H1 (cell line): ENCODE measurements at regions of chr4 and their contacts with region 1.

Region 1: GRCh38 chr4:181261279-181261678 is 981.9 kb upstream of the TENM3 start:
- DNase-seq: no peak
- H3K4me3 ChIP-seq: no peak overlapping the region
- H3K27ac ChIP-seq: no peak overlapping the region
- H3K4me1 ChIP-seq: peaks cover 0 to 3% (median 1%) of the 10 kb centered on the region in 4 experiments; a peak in 3 of 7 replicates
- H3K27me3 ChIP-seq: no peaks in the 10 kb centered on the region
- CTCF ChIP-seq: peak in 2 of 3 experiments; percentile 47 to 52; a peak in 2 of 4 replicates
- EP300 ChIP-seq: no peak
- POLR2A ChIP-seq: no peak
- RAD21 ChIP-seq: peak; percentile 62 to 70

Region 2: DNA sequence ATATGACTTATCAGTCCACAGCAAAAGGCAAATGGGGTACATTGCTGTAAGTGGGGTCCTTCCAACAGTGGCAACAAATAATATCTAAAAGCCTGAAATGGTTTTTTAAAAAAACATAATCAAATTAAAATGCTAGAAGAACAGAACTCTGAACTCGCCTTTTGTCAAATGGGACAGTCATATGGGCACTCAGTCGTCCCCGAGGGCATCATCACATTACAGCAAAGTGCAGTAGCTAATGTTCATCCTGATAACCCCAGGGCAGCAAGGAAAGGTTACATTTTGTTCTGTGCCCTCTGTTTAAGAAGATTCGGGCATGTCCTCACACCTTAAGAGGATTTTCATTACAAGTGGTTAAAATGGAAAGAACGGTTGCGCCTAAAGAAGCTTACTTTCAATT is 16.0 kb before region 1 on chr4:
- CTCF ChIA-PET with region 1: interaction called, 13 read pairs
- POLR2A ChIA-PET with region 1: no interaction called
- DNase-seq: no peak
- H3K4me3 ChIP-seq: no peak overlapping the region
- H3K27ac ChIP-seq: no peak overlapping the region
- H3K4me1 ChIP-seq: peaks cover 2 to 6% (median 3%) of the 10 kb centered on the region in 4 experiments; a peak in 5 of 7 replicates
- H3K27me3 ChIP-seq: no peaks in the 10 kb centered on the region
- CTCF ChIP-seq: no peak
- EP300 ChIP-seq: no peak
- POLR2A ChIP-seq: no peak
- RAD21 ChIP-seq: no peak

Region 3: GRCh38 chr4:181272422-181272821 is 11.1 kb after region 1 on chr4:
- CTCF ChIA-PET with region 1: interaction called, 33 read pairs
- POLR2A ChIA-PET with region 1: no interaction called
- DNase-seq: no peak
- H3K4me3 ChIP-seq: no peak overlapping the region
- H3K27ac ChIP-seq: no peak overlapping the region
- H3K4me1 ChIP-seq: no peaks in the 10 kb centered on the region
- H3K27me3 ChIP-seq: no peaks in the 10 kb centered on the region
- CTCF ChIP-seq: no peak
- EP300 ChIP-seq: no peak
- POLR2A ChIP-seq: no peak
- RAD21 ChIP-seq: no peak

Region 4: GRCh38 chr4:181301735-181302710 is 40.7 kb after region 1 on chr4:
- CTCF ChIA-PET with region 1: interaction called, 12 read pairs
- POLR2A ChIA-PET with region 1: no interaction called
- DNase-seq: peak in 1 of 2 experiments; percentile 69
- H3K4me3 ChIP-seq: no peak overlapping the region
- H3K27ac ChIP-seq: no peak overlapping the region
- H3K4me1 ChIP-seq: no peaks in the 10 kb centered on the region; a peak in 1 of 7 replicates
- H3K27me3 ChIP-seq: no peaks in the 10 kb centered on the region
- CTCF ChIP-seq: peak; percentile 74 to 81 (median 76)
- EP300 ChIP-seq: no peak
- POLR2A ChIP-seq: no peak
- RAD21 ChIP-seq: peak; percentile 73 to 79